HEK293T (cell line): ENCODE measurements at regions of chr6 and their contacts with region 1.

Region 1: GRCh38 chr6:21593412-21593926 is at the start of gene SOX4:
- DNase-seq: peak; percentile 87

Region 2: GRCh38 chr6:20366091-20366832 is 1227.2 kb before region 1 on chr6:
- CTCF ChIA-PET with region 1: no interaction called
- POLR2A ChIA-PET with region 1: no interaction called
- DNase-seq: no peak

Region 3: GRCh38 chr6:20877008-20877937 is 716.2 kb before region 1 on chr6:
- CTCF ChIA-PET with region 1: interaction called, 7 read pairs
- POLR2A ChIA-PET with region 1: interaction called, 10 read pairs
- DNase-seq: no peak

Region 4: GRCh38 chr6:21529431-21529830 is 64.0 kb before region 1 on chr6:
- CTCF ChIA-PET with region 1: no interaction called
- POLR2A ChIA-PET with region 1: no interaction called
- DNase-seq: no peak

Region 5: DNA sequence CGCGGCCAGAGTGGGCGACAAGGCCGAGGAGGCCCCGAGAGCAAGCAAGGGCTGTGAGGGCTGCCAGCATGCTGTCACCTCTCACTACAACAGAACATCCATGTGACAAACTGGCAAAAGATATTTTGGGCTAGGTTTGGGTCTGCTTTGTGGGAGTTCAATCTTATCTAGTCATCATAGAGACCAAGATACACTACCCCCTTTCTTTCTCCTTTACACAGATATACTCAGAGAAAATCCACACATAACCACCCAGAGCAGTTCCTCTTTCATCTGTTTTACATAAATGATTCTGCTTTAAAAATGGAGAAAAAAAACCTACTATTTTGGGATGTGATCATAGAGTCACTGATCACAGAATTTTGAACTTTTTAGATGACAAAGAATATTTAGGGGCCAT is 16.9 kb after region 1 on chr6:
- CTCF ChIA-PET with region 1: no interaction called
- POLR2A ChIA-PET with region 1: interaction called, 14 read pairs
- DNase-seq: no peak

Region 6: GRCh38 chr6:21748343-21749056 is 155.0 kb after region 1 on chr6:
- CTCF ChIA-PET with region 1: interaction called, 7 read pairs
- POLR2A ChIA-PET with region 1: interaction called, 38 read pairs
- DNase-seq: peak; percentile 50

Region 7: GRCh38 chr6:21873562-21873961 is 280.1 kb after region 1 on chr6:
- CTCF ChIA-PET with region 1: no interaction called
- POLR2A ChIA-PET with region 1: no interaction called
- DNase-seq: no peak

Region 8: GRCh38 chr6:21946298-21946783 is 352.9 kb after region 1 on chr6:
- CTCF ChIA-PET with region 1: no interaction called
- POLR2A ChIA-PET with region 1: interaction called, 15 read pairs
- DNase-seq: no peak